Colonic mucosa (tissue), 4 donors: ENCODE measurements at regions of chr17 and their contacts with region 1.

Region 1: GRCh38 chr17:14203388-14203787 is 33.3 kb downstream of the CDRT15 start:
- DNase-seq: no peak
- H3K4me3 ChIP-seq: no peak overlapping the region
- H3K27ac ChIP-seq: no peak overlapping the region
- H3K4me1 ChIP-seq: no peaks in the 10 kb centered on the region
- H3K27me3 ChIP-seq: no peaks in the 10 kb centered on the region
- CTCF ChIP-seq: no peak

Region 2: DNA sequence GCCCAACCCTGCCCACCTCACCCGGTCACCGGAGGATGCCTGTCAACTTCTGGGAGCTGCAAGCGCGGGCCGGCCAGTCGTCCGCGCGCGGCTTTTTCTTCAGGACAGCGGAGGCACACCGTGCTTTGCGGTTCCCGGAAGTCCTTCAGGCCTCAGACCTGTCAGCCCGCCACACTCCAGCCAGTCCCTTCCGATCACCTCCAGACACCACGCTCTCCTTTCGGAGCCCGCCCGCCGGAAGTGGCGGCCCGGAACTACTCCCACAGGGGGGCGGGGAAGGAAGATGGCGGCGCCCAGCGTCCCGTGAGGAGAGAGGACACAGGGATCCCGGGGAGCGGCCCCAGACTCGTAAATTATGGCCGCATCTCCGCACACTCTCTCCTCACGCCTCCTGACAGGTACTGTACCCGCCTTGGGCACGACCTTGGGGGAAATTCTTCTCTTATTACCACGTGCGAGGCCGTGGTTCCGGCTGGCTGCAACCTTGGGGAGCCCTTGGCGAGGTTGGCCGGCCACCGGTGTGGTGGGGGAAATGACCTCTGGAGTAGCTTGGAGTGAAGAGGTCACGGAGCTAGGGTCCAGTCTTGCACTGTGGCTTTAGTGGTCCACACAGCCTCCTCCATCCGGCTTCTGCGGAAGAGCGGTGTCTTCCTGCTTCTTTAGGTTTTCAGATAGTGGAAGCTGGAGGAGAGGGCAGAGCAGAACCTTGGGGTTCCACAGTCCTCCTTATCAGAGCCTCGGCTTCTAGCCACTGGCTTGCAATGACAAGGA is 134.0 kb before region 1 on chr17 and contains the start of gene COX10:
- intact Hi-C with region 1: loop called (anchors 10 kb)
- DNase-seq: peak; percentile 95
- H3K4me3 ChIP-seq: peak within 1 kb of the TSS; percentile 93
- H3K27ac ChIP-seq: peak within 1 kb of the TSS; percentile 83
- H3K4me1 ChIP-seq: peaks cover 3% of the 10 kb centered on the region
- H3K27me3 ChIP-seq: no peaks in the 10 kb centered on the region
- CTCF ChIP-seq: no peak
- total RNA-seq, gene COX10: 35.1 to 36.0 TPM